ENCODE measurements at regions of chr2 and their contacts with region 1.

Region 1: DNA sequence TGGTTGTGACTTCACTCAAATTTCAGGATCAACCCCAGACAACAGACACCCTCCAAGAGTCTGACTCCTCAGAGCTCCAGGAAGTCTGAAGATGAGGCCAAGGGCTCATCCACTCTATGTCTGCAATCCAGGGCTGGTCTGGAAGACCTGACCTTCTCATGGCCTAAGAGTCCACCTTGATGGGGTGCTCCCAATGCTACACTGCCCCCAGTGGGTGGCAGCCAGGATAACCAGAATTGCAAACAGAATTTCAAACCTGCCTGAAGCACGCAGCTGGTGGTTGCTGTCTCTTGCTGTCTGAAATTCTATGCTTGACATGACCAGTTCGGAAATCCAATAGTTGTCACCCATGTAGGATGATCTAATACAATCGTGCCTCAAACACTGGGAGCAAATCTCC is 96.0 kb downstream of the UXS1 start:
- DNase-seq: no peak
- H3K4me3 ChIP-seq: no peak overlapping the region
- H3K4me3 Mint-ChIP-seq: peak overlapping the region in 3 of 8 donors; percentile 5 to 41 (median 34)
- H3K27ac ChIP-seq: peak overlapping the region; percentile 69
- H3K27ac Mint-ChIP-seq: peak overlapping the region in 6 of 7 donors; percentile 1 to 87 (median 50)
- H3K4me1 ChIP-seq: peaks cover 56% of the 10 kb centered on the region
- H3K4me1 Mint-ChIP-seq: peaks cover 25 to 57% (median 41%) of the 10 kb centered on the region in 4 donors
- H3K27me3 ChIP-seq: no peaks in the 10 kb centered on the region
- H3K27me3 Mint-ChIP-seq: no peaks in the 10 kb centered on the region

Region 2: DNA sequence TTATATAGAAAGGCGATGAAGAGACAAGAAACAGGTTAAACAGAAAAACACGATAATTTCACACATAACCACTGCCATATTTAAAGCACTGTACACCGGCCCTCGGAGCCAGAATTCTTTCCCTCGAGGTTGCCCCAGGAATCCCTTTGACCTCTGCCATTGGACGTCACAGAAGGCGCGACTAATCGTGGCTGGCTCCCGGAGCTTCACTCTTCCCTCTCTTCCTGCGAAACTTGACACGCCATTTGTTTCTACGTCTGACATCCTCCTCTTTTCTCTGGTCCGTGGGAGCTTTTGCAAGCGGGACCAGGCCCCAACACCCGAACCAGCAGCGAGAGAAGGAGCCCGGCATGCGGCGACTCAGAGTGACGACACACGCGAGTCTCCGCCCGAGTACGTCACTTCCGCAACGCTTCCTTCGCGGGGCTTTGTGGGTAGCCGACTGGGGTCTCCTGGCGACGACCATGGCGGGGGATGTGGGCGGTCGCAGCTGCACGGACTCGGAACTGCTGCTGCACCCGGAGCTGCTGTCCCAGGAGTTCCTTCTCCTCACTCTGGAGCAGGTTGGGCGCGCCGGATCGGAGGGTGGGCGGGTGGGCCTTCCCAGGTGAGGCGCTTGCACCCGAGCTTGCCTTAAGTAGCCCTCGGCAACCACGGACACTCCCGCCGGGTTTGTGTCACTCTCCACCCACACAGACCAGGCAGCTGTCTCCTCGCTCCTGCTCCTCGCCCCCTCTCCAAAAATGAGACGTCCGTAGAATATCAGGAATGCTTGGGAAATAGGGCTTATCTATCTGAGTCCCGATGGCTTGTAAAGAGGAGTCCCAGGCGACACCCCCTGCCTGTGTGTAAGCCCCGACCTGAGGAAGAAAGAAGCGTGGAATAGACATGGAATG is 760.7 kb before region 1 on chr2 and contains the start of gene C2orf49:
- CTCF ChIA-PET with region 1: no interaction called
- POLR2A ChIA-PET with region 1: interaction called, 3 read pairs
- intact Hi-C with region 1: loop called (anchors 10 kb)
- DNase-seq: peak; percentile 91 to 93 (median 91)
- H3K4me3 ChIP-seq: peak within 1 kb of the TSS; percentile 92 to 93
- H3K4me3 Mint-ChIP-seq: peak within 1 kb of the TSS; percentile 95 to 100 (median 99)
- H3K27ac ChIP-seq: peak within 1 kb of the TSS; percentile 99
- H3K27ac Mint-ChIP-seq: peak within 1 kb of the TSS; percentile 99 to 100 (median 100)
- H3K4me1 ChIP-seq: peaks cover 28% of the 10 kb centered on the region
- H3K4me1 Mint-ChIP-seq: peaks cover 22 to 46% (median 33%) of the 10 kb centered on the region in 4 donors
- H3K27me3 ChIP-seq: no peaks in the 10 kb centered on the region
- H3K27me3 Mint-ChIP-seq: no peaks in the 10 kb centered on the region
- total RNA-seq, gene C2orf49: 29.5 to 29.9 TPM

Region 3: DNA sequence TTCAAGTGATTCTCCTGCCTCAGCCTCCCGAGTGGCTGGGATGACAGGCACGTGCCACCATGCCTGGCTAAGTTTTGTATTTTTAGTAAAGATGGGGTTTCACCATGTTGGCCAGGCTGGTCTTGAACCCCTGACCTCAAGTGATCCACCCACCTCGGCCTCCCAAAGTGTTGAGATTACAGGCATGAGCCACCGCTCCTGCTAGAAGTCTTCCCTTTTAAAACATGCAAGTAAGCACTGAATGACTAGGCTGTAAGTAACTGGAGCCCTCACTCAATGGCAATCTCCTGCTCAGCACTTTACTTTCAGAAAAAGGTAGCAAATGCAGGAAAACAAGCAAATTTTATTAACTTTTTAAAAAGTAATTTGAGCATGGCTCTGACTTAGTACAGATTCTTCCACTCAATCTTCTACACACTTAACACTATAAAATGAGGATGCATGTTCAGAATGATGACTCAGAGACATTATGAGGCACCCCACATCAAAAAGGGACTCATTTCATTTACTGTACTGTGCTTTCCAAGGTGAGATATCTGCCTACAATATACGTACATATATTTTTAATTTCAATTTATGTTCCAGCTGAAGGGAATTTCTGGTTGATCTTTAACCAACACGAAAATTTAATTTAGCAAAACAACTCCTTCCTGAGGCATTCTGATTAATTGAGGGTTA is 360.0 kb before region 1 on chr2:
- CTCF ChIA-PET with region 1: interaction called, 4 read pairs
- POLR2A ChIA-PET with region 1: interaction called, 11 read pairs
- intact Hi-C with region 1: loop called (anchors 1 kb)
- DNase-seq: peak in 4 of 5 donors; percentile 64 to 73 (median 68)
- H3K4me3 ChIP-seq: peak overlapping the region; percentile 1 to 7
- H3K4me3 Mint-ChIP-seq: peak overlapping the region; percentile 64 to 86 (median 80)
- H3K27ac ChIP-seq: peak overlapping the region; percentile 77
- H3K27ac Mint-ChIP-seq: peak overlapping the region; percentile 93 to 98 (median 97)
- H3K4me1 ChIP-seq: peaks cover 94% of the 10 kb centered on the region
- H3K4me1 Mint-ChIP-seq: peaks cover 65 to 92% (median 76%) of the 10 kb centered on the region in 4 donors
- H3K27me3 ChIP-seq: no peaks in the 10 kb centered on the region
- H3K27me3 Mint-ChIP-seq: no peaks in the 10 kb centered on the region

Region 4: DNA sequence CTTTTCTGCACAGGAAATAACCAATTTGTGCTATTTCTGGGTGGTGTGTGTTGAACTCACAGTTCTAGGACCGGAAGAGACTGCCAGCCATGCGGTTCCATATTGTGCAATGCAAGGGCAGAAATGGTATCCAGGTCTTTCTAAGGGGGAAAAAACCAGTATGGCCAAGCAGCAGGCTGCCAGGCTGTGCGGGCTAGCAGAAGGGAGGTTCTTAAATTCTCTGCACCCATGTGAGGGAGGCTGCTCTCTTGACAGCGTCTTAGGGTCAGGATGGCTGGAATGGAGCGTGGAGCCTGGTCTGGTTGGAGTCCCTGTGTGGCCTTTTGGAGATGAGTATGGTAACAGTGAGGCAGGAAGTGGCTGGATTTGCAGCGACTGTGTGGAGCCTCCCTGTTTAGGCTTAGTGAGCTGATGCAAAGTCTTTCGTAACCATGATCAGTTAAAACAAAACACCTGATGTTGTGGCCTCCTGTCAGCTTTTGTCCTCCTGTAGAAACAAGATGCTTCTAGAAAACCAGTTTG is 300.7 kb before region 1 on chr2:
- CTCF ChIA-PET with region 1: interaction called, 7 read pairs
- POLR2A ChIA-PET with region 1: interaction called, 52 read pairs
- intact Hi-C with region 1: loop called (anchors 1 kb)
- DNase-seq: peak in 4 of 5 donors; percentile 53 to 67 (median 58)
- H3K4me3 ChIP-seq: peak overlapping the region; percentile 1 to 33
- H3K4me3 Mint-ChIP-seq: peak overlapping the region; percentile 74 to 88 (median 82)
- H3K27ac ChIP-seq: peak overlapping the region; percentile 74
- H3K27ac Mint-ChIP-seq: peak overlapping the region; percentile 86 to 98 (median 95)
- H3K4me1 ChIP-seq: peaks cover 99% of the 10 kb centered on the region
- H3K4me1 Mint-ChIP-seq: peaks cover 82 to 95% (median 88%) of the 10 kb centered on the region in 4 donors
- H3K27me3 ChIP-seq: no peaks in the 10 kb centered on the region
- H3K27me3 Mint-ChIP-seq: no peaks in the 10 kb centered on the region

Region 5: GRCh38 chr2:105919826-105920225 is 178.3 kb before region 1 on chr2:
- CTCF ChIA-PET with region 1: interaction called, 10 read pairs
- POLR2A ChIA-PET with region 1: interaction called, 17 read pairs
- intact Hi-C with region 1: no loop called
- DNase-seq: peak; percentile 46 to 57 (median 54)
- H3K4me3 ChIP-seq: no peak overlapping the region
- H3K4me3 Mint-ChIP-seq: no peak overlapping the region
- H3K27ac ChIP-seq: no peak overlapping the region
- H3K27ac Mint-ChIP-seq: no peak overlapping the region
- H3K4me1 ChIP-seq: peaks cover 9% of the 10 kb centered on the region
- H3K4me1 Mint-ChIP-seq: peaks cover 22 to 39% (median 34%) of the 10 kb centered on the region in 4 donors
- H3K27me3 ChIP-seq: no peaks in the 10 kb centered on the region
- H3K27me3 Mint-ChIP-seq: no peaks in the 10 kb centered on the region

Region 6: DNA sequence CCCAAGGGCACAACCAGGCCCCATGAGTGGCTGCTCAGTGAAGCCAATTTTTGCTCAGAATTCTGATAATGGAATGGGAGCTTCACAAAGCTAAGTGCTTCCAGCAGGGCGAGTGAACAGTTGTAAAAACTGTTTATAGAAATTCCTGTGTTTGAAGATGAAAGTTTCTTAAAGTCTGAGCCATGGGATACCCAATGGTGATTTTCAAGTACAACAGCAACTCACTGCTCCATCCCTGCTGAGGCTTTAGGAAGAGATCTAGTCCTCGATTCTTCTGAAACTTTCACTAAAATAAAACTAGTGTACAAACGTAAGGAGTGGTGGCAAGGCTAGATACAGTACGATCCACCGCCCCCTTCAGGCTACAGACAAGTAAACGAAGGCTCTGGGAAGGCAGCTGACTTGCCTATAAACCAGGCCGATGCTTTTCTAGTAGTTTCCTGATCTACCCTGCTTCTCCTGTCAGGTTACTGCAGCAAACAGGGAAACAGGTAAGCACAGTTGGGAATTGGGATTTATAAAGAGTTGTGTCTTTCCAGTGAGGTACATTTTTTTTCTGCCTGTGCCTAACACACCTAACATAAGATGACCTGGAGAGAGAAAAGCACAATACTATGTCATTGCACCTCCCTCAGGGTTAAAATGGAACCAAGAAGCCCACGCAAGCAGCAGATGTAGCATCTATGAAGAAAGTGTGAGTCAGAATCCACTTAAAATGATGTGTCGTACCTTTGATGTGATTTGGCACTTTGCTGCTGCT is 12.7 kb before region 1 on chr2:
- CTCF ChIA-PET with region 1: interaction called, 59 read pairs
- POLR2A ChIA-PET with region 1: interaction called, 52 read pairs
- intact Hi-C with region 1: loop called (anchors 1 kb)
- DNase-seq: peak; percentile 68 to 76 (median 73)
- H3K4me3 ChIP-seq: no peak overlapping the region
- H3K4me3 Mint-ChIP-seq: peak overlapping the region; percentile 28 to 90 (median 69)
- H3K27ac ChIP-seq: peak overlapping the region; percentile 42
- H3K27ac Mint-ChIP-seq: peak overlapping the region; percentile 87 to 98 (median 93)
- H3K4me1 ChIP-seq: peaks cover 63% of the 10 kb centered on the region
- H3K4me1 Mint-ChIP-seq: peaks cover 39 to 65% (median 55%) of the 10 kb centered on the region in 4 donors
- H3K27me3 ChIP-seq: no peaks in the 10 kb centered on the region
- H3K27me3 Mint-ChIP-seq: no peaks in the 10 kb centered on the region